SK-N-SH (cell line): ENCODE measurements at regions of chr11 and their contacts with region 1.

Region 1: DNA sequence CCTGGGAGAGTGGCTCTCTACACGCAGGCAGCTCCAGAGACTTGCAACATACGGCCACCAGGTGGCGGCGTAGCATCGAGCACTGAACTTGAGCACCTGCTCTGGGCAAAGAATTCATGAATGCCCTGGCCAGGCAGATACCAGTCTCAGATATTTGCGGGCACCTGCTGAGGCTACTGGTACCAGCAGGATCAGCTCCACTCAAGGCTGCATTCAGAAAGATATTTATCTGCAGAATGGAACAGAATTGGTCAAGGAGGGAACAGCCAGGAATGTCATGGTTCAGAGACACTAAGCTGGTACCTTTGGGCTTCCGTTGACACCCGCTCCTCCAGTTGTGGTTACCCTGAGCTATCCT is 10.8 kb upstream of the CCDC86 start:
- DNase-seq: peak; percentile 80
- H3K4me3 ChIP-seq: peak overlapping the region in 1 of 2 experiments; percentile 6; a peak in 1 of 4 replicates
- H3K27ac ChIP-seq: no peak overlapping the region
- H3K4me1 ChIP-seq: peaks cover 0 to 16% of the 10 kb centered on the region in 2 experiments; a peak in 2 of 4 replicates
- H3K27me3 ChIP-seq: peaks cover 6% of the 10 kb centered on the region; the same call in 1 of the 2 replicates
- CTCF ChIP-seq: peak; percentile 91
- EP300 ChIP-seq: no peak
- RAD21 ChIP-seq: peak; percentile 93

Region 2: GRCh38 chr11:60184824-60185511 is 646.2 kb before region 1 on chr11:
- CTCF ChIA-PET with region 1: no interaction called
- POLR2A ChIA-PET with region 1: no interaction called
- DNase-seq: no peak
- H3K4me3 ChIP-seq: no peak overlapping the region
- H3K27ac ChIP-seq: no peak overlapping the region
- H3K4me1 ChIP-seq: no peaks in the 10 kb centered on the region
- H3K27me3 ChIP-seq: no peaks in the 10 kb centered on the region; the same call in 1 of the 2 replicates
- CTCF ChIP-seq: no peak
- EP300 ChIP-seq: no peak
- RAD21 ChIP-seq: no peak

Region 3: DNA sequence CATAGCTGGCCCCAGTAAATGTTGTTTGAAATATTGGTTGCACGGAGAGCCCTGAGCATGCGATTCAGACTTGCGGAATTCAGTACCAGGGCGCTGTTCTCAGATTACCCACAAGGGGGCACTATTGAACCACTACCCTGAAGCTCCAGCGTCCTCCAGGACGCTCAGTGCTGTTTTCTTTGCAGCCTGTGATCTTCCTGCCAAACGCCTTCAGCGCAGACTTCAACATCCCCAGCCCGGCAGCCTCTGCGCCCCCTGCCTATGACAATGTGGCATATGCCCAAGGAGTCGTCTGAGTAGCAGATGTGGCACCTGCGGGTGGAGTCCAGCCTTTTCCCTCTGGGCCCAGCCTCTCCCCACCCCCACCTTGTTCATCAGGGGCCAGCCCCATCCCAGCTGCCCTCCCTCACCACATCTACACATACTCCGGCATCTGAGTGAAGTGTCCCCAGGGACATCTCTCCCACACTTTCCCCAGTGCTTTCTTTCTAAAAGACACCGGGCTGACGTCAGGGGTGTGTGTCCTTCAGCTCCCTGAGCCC is 55.6 kb before region 1 on chr11:
- CTCF ChIA-PET with region 1: interaction called, 50 read pairs
- POLR2A ChIA-PET with region 1: no interaction called
- DNase-seq: peak; percentile 85
- H3K4me3 ChIP-seq: peak overlapping the region in 1 of 2 experiments; percentile 45; a peak in 1 of 4 replicates
- H3K27ac ChIP-seq: no peak overlapping the region
- H3K4me1 ChIP-seq: peaks cover 3 to 6% of the 10 kb centered on the region in 2 experiments; a peak in 2 of 4 replicates
- H3K27me3 ChIP-seq: no peaks in the 10 kb centered on the region
- CTCF ChIP-seq: peak; percentile 94
- EP300 ChIP-seq: no peak
- RAD21 ChIP-seq: peak; percentile 83

Region 4: DNA sequence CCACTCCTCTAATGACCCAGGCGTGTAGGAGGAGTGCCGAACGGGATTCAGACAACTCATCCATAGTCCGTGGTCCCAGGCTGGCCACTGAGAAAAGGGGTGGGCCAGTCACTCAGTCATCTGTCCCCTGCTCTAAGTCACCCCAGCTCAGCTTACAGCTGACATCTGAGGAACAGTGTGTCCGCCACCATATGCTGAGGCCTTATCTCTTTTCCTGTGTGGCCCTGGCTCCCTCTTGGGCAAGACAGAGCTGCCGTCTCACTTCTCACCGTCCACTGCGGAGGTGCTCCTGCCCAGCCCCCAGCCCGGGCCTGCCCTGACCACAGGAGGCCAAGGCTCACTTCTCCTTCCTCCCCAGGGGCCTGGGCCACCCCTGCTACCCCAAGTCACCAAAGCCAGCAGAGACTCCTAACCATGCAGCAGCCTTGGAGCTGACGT is 17.6 kb after region 1 on chr11:
- CTCF ChIA-PET with region 1: interaction called, 18 read pairs
- POLR2A ChIA-PET with region 1: no interaction called
- DNase-seq: no peak
- H3K4me3 ChIP-seq: no peak overlapping the region
- H3K27ac ChIP-seq: no peak overlapping the region
- H3K4me1 ChIP-seq: peaks cover 0 to 19% of the 10 kb centered on the region in 2 experiments; a peak in 3 of 4 replicates
- H3K27me3 ChIP-seq: no peaks in the 10 kb centered on the region
- CTCF ChIP-seq: no peak
- EP300 ChIP-seq: no peak
- RAD21 ChIP-seq: no peak

Region 5: GRCh38 chr11:60872961-60873524 is 41.9 kb after region 1 on chr11:
- CTCF ChIA-PET with region 1: interaction called, 56 read pairs
- POLR2A ChIA-PET with region 1: no interaction called
- DNase-seq: peak; percentile 8
- H3K4me3 ChIP-seq: no peak overlapping the region
- H3K27ac ChIP-seq: no peak overlapping the region
- H3K4me1 ChIP-seq: peaks cover 0 to 8% of the 10 kb centered on the region in 2 experiments; a peak in 1 of 4 replicates
- H3K27me3 ChIP-seq: no peaks in the 10 kb centered on the region
- CTCF ChIP-seq: no peak
- EP300 ChIP-seq: no peak
- RAD21 ChIP-seq: no peak

Region 6: DNA sequence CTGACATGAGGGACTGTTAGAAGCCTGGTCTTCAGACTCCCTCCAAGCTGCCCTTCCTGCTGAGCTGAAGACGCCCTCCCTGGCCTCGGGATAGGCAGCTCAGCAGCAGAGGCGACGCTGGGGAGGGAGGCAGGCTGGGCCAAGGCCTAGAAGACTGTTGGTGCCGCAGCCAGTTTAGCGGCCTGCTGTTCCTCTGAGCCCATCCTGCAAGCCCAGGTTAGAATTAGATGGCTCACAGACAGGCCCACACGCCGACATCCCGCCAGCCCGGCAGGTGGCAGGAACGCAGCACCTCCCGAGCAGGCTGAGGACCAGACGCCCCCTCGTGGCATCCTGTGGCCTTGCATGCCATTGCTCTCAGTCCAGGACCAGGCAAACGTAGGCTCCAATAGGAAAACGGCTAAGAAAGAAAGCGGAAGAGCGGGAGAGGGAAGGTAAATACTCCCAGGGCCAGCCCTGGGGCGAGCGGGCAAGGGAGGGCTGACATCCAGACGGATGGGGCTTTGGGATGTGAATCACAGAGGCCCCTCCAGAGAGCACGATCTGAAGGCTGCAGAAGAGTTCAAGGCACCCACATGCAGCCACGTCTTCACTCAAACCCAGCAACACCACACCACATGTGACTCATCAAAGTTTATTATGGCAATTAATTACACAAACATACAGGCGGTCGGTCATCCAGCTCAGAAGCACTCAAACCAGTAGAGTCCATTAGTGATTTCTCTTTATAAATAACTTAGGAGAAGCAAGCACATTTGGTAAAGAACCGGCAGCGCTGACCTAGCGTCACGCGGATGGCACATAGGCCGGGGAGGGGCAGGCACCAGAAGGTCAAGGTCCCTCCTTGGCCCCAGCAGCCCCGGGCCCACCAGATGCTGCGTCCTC is 298.8 kb after region 1 on chr11:
- CTCF ChIA-PET with region 1: interaction called, 44 read pairs
- POLR2A ChIA-PET with region 1: no interaction called
- DNase-seq: peak; percentile 96
- H3K4me3 ChIP-seq: peak overlapping the region; percentile 21 to 30; a peak in 2 of 4 replicates
- H3K27ac ChIP-seq: peak overlapping the region; percentile 35 to 51; a peak in 3 of 4 replicates
- H3K4me1 ChIP-seq: peaks cover 0 to 38% of the 10 kb centered on the region in 2 experiments; a peak in 1 of 4 replicates
- H3K27me3 ChIP-seq: no peaks in the 10 kb centered on the region
- CTCF ChIP-seq: peak; percentile 99
- EP300 ChIP-seq: 0 out of 4 replicates have a peak, but pooled peaks of 1 of the 2 experiments have one; percentile 3
- RAD21 ChIP-seq: peak; percentile 95